Left colon (tissue), 2 donors: ENCODE measurements at regions of chr1 and their contacts with region 1.

Region 1: DNA sequence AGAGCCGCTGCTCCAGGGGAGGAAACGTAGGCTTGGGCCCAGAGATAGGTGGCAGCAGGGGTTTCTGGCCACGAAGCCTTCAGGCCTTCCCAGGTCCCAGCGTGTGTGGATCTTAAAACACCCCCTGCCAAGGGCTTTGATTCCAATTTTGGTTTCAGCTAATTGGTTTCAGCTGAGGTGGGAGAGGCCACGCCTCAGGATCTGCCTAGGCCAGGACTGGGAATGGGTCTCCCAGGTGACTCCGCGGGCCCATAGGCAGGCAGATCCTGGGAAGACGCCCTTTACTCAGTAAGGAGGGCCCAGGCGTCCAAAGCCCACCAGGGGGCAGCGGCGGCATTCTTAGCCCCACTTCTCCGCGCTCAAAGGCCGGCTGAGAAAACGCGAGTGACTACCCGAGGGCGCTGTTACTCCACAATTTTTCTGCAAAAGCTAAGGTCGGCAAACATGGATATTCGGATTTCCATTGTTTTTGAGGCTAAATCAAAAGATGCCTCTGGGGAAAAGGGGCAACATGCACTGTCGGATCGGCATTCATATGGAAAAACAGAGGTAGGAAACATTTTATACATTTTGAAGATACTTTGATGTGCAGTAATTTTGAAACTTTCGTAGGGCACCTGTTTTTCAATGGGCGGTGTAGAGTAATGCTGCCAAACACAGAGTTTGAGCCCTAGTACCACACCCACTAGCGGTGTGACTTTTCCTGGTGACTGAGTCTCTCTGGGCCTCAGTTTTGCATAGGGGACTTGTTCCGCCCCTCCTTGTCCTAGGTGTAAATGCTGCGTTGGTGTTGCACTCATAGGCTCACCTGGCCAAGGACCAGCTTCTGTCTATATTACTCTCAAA is 31.8 kb upstream of the BCL10 start:
- DNase-seq: peak; percentile 73 to 91
- ATAC-seq: peak; percentile 100

Region 2: DNA sequence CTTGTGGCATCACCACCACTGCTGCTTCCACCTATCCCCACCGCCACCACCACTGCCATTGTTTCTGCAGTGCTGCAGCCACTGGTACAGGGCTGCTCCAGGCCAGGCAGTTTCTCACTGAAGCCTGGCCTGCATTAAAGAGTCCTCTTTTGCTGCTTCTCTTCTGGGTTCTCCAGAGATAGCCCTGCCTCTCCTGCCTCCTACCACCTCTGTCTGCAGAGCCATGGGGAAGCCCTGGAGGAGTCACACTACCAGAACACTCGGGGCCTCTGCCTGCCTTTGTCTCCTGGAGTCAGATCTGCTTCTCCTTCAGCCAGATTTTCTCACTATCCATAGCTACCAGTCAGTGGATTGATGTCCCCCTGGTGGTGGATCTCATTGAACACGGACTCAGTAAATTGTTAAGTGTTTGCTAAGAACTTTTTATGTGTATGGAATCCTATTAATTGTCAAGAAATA is 194.4 kb after region 1 on chr1:
- intact Hi-C with region 1: loop called in 1 of 2 experiments (anchors 2 kb)
- DNase-seq: peak; percentile 38 to 57
- ATAC-seq: peak; percentile 92

Region 3: GRCh38 chr1:85580872-85581801 is 272.9 kb after region 1 on chr1:
- intact Hi-C with region 1: loop called in 1 of 2 experiments (anchors 10 kb)
- DNase-seq: peak; percentile 70 to 82
- ATAC-seq: peak; percentile 87

Region 4: GRCh38 chr1:85697895-85698294 is 389.7 kb after region 1 on chr1:
- intact Hi-C with region 1: loop called in 1 of 2 experiments (anchors 5 kb)
- DNase-seq: no peak
- ATAC-seq: no peak

Region 5: DNA sequence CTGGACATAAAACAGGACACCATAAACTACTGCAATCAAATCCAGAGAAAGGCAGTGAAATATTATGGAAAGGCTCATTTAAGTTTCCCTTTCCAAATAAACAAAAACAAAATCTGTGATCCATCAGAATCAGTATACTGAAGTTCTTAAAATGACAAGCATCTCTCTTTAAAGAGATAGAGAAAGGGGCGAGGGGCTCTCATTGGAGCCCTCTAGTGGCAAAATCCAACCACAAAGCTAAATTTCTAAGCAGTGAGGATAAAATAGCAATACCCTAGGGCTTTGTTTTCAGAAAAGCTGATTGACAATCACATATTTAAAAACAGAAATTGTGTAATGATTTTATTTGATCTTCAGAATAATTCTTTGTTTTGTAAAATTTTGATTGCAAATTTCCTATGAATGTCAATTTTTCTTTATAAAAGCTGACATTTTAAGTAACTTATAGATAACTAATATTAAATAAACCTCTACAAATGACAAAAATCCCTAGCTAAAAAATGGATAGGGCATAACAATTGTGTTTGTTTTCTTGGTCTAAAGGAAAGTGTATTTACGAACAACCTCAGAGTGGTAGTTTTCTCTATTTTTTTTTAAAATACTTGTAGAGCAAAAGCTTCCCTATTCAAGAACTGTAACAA is 710.2 kb after region 1 on chr1:
- intact Hi-C with region 1: loop called in 1 of 2 experiments (anchors 10 kb)
- DNase-seq: peak in 1 of 2 donors; percentile 7
- ATAC-seq: no peak